Right lobe of liver (tissue), 6 donors: ENCODE measurements at regions of chr7 and their contacts with region 1.

Region 1: DNA sequence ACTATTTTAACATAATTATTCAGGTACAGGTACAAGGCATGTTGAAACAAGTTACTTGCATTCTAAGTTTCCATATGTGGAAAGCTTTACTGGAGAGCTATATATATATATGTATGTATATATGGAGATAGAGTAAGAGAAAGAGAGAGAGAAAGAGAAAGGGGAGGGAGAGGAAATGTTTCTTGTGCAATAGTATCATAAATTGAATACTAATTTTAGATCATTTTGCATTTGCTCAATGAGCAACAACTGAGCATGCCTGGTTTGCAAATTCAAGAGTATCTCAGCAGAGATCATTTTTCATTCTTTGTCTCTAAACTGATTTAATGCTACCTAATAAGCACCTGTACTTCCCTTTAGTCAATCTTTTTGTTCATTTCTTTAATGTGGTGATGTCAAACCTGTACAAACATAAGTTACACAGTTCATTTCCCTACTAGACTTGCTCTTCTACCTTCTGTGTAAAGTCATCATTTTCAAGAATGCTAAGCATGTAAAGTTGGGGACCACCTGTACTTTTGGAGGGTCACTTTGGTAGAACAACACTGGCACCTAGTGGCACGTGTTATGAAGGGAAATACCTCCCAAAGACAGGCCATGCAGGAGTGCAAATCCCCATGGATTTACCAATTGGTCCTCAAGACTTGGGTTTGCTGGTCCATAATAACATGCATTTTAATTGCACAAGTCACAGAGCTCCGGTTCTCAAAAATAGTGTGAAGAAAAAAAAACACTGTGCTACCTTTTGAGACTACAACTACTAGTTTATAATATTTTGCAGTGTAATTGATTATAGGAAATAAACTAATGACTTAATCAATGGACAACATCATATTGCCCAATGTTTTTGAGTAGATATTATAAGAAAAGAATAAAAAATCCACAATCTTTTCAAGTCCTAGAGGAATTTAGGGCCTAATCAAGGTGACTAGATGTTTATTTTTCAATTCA is 431.2 kb upstream of the IGFBP3 start:
- DNase-seq: peak in 1 of 3 donors; percentile 54
- ATAC-seq: peak; percentile 79 to 93 (median 88)
- H3K4me3 ChIP-seq: no peak overlapping the region
- H3K27ac ChIP-seq: no peak overlapping the region
- H3K4me1 ChIP-seq: no peaks in the 10 kb centered on the region
- H3K27me3 ChIP-seq: no peaks in the 10 kb centered on the region
- CTCF ChIP-seq: peak; percentile 66 to 90 (median 74)
- POLR2A ChIP-seq: no peak

Region 2: GRCh38 chr7:45917658-45918057 is 434.6 kb before region 1 on chr7:
- intact Hi-C with region 1: loop called (anchors 5 kb)
- DNase-seq: peak; percentile 78 to 84 (median 80)
- ATAC-seq: peak; percentile 63 to 79 (median 66)
- H3K4me3 ChIP-seq: peak overlapping the region in 2 of 3 donors; percentile 14 to 59
- H3K27ac ChIP-seq: peak overlapping the region in 1 of 3 donors; percentile 3
- H3K4me1 ChIP-seq: peaks cover 0 to 18% (median 6%) of the 10 kb centered on the region in 4 donors
- H3K27me3 ChIP-seq: no peaks in the 10 kb centered on the region
- CTCF ChIP-seq: peak; percentile 78 to 97 (median 97)
- POLR2A ChIP-seq: no peak

Region 3: DNA sequence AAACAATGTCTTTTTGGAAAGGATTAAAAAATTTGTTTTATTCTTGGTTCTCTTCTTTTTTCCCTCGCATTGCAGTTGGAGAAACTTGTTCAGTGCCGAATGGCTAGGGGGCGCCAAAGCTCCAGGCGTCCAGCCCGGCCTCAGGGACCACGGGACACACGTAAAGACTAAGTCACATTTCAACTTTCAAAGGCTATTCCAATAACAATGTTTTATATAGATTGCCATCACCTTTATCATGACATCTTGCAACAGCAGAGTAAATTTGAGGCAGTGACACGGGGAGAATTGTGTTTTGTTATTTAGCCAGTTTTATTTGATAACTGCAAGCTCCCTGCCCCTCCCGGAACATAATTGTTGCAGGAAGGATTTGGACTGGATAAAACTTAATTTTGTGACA is 429.0 kb before region 1 on chr7:
- intact Hi-C with region 1: loop called (anchors 5 kb)
- DNase-seq: peak; percentile 70 to 79 (median 74)
- ATAC-seq: peak; percentile 44 to 62 (median 58)
- H3K4me3 ChIP-seq: peak overlapping the region in 1 of 3 donors; percentile 59
- H3K27ac ChIP-seq: peak overlapping the region in 1 of 3 donors; percentile 39
- H3K4me1 ChIP-seq: peaks cover 0 to 23% (median 2%) of the 10 kb centered on the region in 4 donors
- H3K27me3 ChIP-seq: no peaks in the 10 kb centered on the region
- CTCF ChIP-seq: peak; percentile 76 to 94 (median 88)
- POLR2A ChIP-seq: no peak

Region 4: DNA sequence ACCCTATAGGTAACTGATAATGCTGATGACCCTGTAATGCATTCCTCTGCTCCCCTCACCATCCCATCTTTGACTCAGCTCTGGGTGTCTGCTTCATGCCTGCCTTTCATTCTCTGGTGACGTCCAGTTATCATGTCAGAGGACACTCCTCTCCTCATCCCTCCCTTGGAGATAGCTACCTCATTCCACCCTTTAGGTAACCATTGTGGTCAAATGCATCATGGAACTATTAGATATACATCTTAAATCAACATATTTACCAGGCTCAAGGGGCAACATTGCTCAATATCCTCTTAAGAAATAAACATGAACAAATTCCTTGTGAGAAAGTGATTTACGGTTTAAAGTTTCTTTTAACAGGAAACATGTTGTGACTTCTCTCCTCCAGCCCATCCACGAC is 80.4 kb after region 1 on chr7:
- intact Hi-C with region 1: no loop called
- DNase-seq: no peak
- ATAC-seq: no peak
- H3K4me3 ChIP-seq: no peak overlapping the region
- H3K27ac ChIP-seq: no peak overlapping the region
- H3K4me1 ChIP-seq: no peaks in the 10 kb centered on the region
- H3K27me3 ChIP-seq: no peaks in the 10 kb centered on the region
- CTCF ChIP-seq: no peak
- POLR2A ChIP-seq: no peak